Activated CD8-positive, alpha-beta T cell treated with anti-CD3 and anti-CD28 coated beads, Interleukin-2, amount 10 ng/mL, durations not matched to agents 7 days and 5 days (primary cell): ENCODE measurements at regions of chr10 and their contacts with region 1.

Region 1: DNA sequence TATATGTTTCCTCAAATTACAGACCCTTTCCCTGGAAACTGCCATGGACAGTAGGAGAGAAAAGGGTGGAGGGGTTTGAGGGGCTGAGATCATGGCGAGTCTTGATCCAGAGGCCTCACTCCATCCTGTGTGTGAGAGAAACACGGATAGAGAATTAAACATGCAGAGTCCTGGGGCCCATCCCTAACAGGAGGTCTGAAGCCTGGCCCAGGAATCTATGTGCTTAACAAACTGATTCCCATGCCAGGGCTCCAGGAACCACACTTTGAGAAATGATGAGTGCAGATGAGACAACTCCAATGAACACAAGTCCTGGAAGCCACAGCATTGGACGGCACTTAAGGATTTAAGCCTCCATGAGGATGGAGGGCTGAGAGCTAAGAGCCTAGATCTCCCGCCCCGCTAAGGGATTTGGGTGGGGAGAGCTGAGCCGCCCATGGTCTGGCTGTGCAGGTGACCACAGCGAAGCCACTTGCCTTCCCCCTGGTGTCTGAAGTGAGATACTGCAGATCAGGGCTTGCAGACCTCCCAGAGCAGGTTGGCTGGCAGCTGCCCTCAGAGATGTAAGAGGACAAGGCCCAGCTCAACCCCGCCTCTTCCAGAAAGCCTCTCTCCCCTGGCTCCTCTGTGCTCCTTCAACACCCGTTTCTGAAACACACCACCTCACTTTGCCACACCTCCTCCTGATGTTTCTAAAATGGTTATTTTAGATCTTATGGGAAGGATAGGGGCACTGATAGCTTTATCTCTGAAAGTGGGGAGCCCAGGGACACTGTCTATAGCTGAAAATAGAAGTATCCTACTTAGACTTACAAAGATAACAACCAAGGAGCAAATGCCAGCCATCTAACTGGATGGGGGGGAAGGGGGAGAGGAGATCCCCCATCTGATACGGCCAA is 24.8 kb upstream of the EIF5AL1 start:
- DNase-seq: peak; percentile 47
- ATAC-seq: peak; percentile 78
- H3K4me3 Mint-ChIP-seq: no peak overlapping the region
- H3K27ac Mint-ChIP-seq: no peak overlapping the region
- H3K4me1 Mint-ChIP-seq: peaks cover 7% of the 10 kb centered on the region
- H3K27me3 Mint-ChIP-seq: peaks cover 6% of the 10 kb centered on the region

Region 2: DNA sequence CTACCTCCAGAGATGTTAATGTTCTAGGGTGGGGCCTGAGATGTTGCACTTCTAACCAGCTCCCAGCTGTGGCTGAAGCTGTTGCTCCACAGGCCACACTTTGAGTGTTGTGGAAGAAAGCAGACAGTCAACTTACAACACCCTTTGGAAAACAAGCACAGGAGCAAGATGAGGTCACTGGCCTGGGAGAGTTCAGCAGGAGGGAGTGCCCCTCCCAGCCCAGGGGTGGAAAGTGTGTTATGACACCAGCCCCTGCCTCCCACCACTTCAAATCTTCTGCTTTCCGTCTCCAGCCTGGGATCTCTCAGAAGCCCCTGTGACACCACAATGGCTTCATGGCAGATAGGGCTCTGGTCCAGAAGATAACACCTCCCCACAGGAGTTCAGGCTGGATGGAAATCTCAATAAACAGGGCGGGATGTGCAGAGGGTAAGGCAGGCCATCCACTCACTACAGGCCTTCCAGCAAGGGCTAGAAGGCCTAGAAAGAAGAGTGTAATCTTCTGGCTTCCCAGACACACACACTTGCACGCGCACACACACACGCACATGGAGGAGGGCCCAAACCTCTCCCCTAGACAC is 467.5 kb before region 1 on chr10:
- CTCF ChIA-PET with region 1: no interaction called
- POLR2A ChIA-PET with region 1: no interaction called
- DNase-seq: no peak
- ATAC-seq: no peak
- H3K4me3 Mint-ChIP-seq: no peak overlapping the region
- H3K27ac Mint-ChIP-seq: no peak overlapping the region
- H3K4me1 Mint-ChIP-seq: peaks cover 2% of the 10 kb centered on the region
- H3K27me3 Mint-ChIP-seq: peaks cover 4% of the 10 kb centered on the region

Region 3: GRCh38 chr10:79473496-79474095 is 13.9 kb before region 1 on chr10:
- CTCF ChIA-PET with region 1: interaction called, 10 read pairs
- POLR2A ChIA-PET with region 1: no interaction called
- DNase-seq: no peak
- ATAC-seq: no peak
- H3K4me3 Mint-ChIP-seq: no peak overlapping the region
- H3K27ac Mint-ChIP-seq: no peak overlapping the region
- H3K4me1 Mint-ChIP-seq: no peaks in the 10 kb centered on the region
- H3K27me3 Mint-ChIP-seq: peaks cover 24% of the 10 kb centered on the region

Region 4: DNA sequence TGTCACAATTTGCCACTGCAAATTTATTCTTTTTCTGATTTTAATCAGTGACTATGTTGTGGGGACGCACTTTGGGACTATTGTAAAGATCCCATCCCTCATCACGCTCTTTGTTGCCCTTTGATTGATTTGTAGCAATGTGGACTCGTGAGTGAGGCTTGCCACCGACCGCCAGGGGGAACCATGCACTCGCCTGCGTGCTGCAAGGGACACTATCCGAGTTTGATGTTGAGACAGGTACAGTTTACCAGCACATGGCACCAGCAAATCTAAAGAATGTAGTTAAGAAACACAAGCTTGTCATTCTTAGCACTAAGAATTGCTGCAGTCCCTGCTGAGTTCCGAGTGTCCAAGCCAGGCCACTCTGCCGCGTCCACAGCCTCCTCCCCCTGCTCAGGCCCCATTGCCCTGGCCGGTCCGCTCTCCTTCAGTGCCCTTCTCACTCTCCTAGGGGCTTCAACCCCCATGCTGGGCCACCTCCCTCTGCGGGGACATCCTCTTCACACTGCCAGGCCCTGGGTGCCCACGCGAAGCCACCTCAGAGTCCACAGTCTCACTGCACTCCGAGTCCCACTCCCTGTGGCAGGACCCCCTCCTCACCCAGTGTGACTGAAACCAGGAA is 74.7 kb after region 1 on chr10:
- CTCF ChIA-PET with region 1: no interaction called
- POLR2A ChIA-PET with region 1: no interaction called
- DNase-seq: peak; percentile 77
- ATAC-seq: peak; percentile 84
- H3K4me3 Mint-ChIP-seq: no peak overlapping the region
- H3K27ac Mint-ChIP-seq: no peak overlapping the region
- H3K4me1 Mint-ChIP-seq: peaks cover 5% of the 10 kb centered on the region
- H3K27me3 Mint-ChIP-seq: peaks cover 24% of the 10 kb centered on the region